GM10248 (cell line): ENCODE measurements at regions of chr1 and their contacts with region 1.

Region 1: GRCh38 chr1:110011527-110012041 is 22.8 kb upstream of the STRIP1 start:
- DNase-seq: peak; percentile 80
- CTCF ChIP-seq: peak; percentile 50

Region 2: DNA sequence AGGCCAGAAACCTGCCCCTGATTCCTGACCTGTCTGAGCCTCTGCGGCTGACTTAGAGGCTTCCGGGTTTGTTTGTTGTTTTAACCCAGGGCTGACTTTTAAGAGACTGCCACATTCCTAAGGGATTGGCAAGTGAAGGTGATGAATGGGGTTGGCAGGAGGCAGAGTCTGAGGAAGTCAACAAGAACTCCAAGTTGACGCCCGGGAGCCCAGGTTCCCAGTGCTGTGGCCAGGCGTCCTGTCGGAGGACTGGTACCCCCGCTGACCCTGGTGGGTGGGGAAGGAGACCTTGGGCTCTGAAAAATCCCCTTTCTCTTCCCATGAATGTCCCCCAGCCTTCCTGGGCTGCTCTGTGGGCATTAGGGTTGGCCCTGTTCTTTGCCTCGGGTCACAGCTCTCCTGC is 228.2 kb before region 1 on chr1:
- CTCF ChIA-PET with region 1: interaction called, 15 read pairs
- POLR2A ChIA-PET with region 1: no interaction called
- DNase-seq: no peak
- CTCF ChIP-seq: no peak

Region 3: DNA sequence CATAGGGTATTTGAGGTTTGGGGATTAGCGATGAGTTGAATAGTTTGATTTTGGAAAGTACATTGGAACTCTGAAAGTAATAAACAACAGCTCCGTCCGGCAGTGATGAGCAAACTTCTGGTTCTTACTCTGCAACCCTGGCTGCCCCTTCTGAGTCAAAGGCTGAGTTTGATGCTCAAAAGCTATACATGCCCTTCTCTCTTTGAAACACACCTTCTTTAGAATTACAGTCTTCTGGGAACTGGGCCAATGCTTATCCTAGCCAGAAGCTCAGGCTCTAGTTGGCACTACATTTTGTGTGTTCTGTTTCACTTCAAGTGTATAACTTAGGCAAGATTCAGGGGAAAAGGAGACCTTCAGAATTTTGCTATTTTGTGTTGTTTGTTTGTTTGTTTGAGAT is 17.7 kb before region 1 on chr1:
- CTCF ChIA-PET with region 1: interaction called, 108 read pairs
- POLR2A ChIA-PET with region 1: no interaction called
- DNase-seq: no peak
- CTCF ChIP-seq: no peak